Breast epithelium (tissue), 4 donors: ENCODE measurements at regions of chr4 and their contacts with region 1.

Region 1: DNA sequence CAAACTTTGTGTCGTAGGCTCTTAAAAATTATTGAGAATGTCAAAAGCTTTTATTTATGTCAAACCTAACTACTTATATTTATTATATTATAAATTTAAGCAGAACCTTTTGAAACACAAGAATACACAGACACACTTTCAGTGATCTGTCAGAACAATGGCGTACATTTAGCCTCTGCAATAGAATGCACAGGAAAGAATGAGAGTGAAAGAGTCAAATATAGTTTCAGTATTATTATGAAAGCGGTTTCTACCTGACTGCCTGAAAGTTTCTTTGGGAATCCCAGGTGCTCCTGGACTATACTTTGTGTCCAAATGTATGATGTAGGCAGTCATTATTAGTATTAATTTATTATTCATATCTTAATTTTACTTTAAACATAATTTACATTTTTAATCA is 872.0 kb upstream of the AGA start:
- DNase-seq: no peak
- H3K4me3 ChIP-seq: no peak overlapping the region
- H3K27ac ChIP-seq: no peak overlapping the region
- H3K4me1 ChIP-seq: no peaks in the 10 kb centered on the region
- H3K27me3 ChIP-seq: no peaks in the 10 kb centered on the region
- CTCF ChIP-seq: no peak
- POLR2A ChIP-seq: no peak

Region 2: GRCh38 chr4:178296669-178297068 is 17.6 kb before region 1 on chr4:
- intact Hi-C with region 1: loop called (anchors 1 kb)
- DNase-seq: no peak
- H3K4me3 ChIP-seq: no peak overlapping the region
- H3K27ac ChIP-seq: no peak overlapping the region
- H3K4me1 ChIP-seq: no peaks in the 10 kb centered on the region
- H3K27me3 ChIP-seq: no peaks in the 10 kb centered on the region
- CTCF ChIP-seq: no peak
- POLR2A ChIP-seq: no peak

Region 3: DNA sequence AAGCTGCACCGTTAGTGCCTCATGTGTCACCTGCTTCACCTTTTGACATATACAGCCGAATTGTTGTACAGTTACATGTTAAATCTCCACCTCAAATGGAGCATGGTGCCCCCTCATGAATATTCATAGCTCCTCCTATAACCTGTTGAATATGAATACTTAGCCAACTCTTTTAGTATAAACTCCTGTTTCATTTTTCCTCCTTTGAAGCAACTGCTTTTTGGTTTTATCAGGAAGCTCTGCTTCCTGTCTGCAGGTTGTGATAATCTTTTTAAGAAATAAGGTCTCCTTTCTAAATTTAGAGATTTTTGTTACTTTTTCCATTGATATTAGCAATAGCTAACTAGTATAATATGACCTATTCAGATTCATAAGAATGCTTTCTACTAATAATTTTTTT is 557.2 kb after region 1 on chr4:
- intact Hi-C with region 1: no loop called
- DNase-seq: no peak
- H3K4me3 ChIP-seq: no peak overlapping the region
- H3K27ac ChIP-seq: no peak overlapping the region
- H3K4me1 ChIP-seq: no peaks in the 10 kb centered on the region
- H3K27me3 ChIP-seq: no peaks in the 10 kb centered on the region
- CTCF ChIP-seq: no peak
- POLR2A ChIP-seq: no peak